Panc1 (cell line): ENCODE measurements at regions of chr15 and their contacts with region 1.

Region 1: GRCh38 chr15:67521029-67521811 is at the start of gene C15orf61:
- DNase-seq: no peak
- ATAC-seq: peak; percentile 94
- H3K4me3 ChIP-seq: peak within 1 kb of the TSS; percentile 77 to 84
- H3K27ac ChIP-seq: peak within 1 kb of the TSS; percentile 86
- H3K4me1 ChIP-seq: peaks cover 15% of the 10 kb centered on the region
- H3K27me3 ChIP-seq: no peaks in the 10 kb centered on the region
- CTCF ChIP-seq: peak; percentile 33
- total RNA-seq, gene C15orf61: 5.6 TPM

Region 2: GRCh38 chr15:68078365-68078764 is 557.1 kb after region 1 on chr15:
- CTCF ChIA-PET with region 1: no interaction called
- POLR2A ChIA-PET with region 1: interaction called, 17 read pairs
- in situ Hi-C with region 1: no loop called
- intact Hi-C with region 1: no loop called
- DNase-seq: no peak
- ATAC-seq: no peak
- H3K4me3 ChIP-seq: no peak overlapping the region
- H3K27ac ChIP-seq: no peak overlapping the region
- H3K4me1 ChIP-seq: peaks cover 52% of the 10 kb centered on the region
- H3K27me3 ChIP-seq: no peaks in the 10 kb centered on the region
- CTCF ChIP-seq: no peak